HAP-1 (cell line): ENCODE measurements at regions of chr10 and their contacts with region 1.

Region 1: DNA sequence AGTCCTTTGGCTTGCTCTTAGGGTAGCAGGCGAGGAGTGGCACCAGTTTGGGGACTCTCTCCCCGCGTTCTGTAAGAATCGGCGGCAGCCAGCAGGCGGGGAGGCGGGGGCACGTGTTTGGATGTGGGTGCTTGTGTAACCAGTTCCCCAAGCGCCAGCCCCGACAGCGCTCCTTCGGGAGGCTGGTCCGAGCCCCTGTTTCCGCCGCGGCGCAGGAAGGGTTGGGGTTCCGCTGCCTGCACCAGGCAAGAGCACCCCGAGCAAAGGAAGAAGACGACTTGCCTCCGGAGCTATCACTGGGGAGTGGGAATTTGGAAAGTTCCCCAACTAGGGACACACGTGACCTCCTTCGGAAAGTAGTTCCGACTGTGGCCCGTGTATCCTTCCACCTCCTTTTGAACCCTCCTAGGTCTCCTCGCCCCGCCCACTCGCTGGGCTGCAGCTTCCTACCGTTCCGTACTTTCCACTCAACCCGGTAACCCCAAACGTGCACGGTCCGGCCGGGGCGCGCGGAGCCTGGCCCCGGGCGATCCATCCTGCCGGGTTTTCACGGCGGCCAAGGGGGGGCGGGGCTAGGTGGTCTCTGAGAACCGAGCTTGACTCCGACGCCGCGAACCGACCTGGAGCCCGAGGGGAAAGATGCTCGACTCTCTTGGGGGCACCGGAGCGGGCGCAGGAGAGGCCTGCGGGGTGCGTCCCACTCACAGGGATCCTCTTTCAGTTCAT is 1.2 kb downstream of the KLLN start:
- DNase-seq: peak; percentile 87 to 95
- H3K4me3 ChIP-seq: peak overlapping the region; percentile 73
- H3K4me1 ChIP-seq: peaks cover 4% of the 10 kb centered on the region; the same call in 1 of the 2 replicates
- H3K27me3 ChIP-seq: no peaks in the 10 kb centered on the region

Region 2: DNA sequence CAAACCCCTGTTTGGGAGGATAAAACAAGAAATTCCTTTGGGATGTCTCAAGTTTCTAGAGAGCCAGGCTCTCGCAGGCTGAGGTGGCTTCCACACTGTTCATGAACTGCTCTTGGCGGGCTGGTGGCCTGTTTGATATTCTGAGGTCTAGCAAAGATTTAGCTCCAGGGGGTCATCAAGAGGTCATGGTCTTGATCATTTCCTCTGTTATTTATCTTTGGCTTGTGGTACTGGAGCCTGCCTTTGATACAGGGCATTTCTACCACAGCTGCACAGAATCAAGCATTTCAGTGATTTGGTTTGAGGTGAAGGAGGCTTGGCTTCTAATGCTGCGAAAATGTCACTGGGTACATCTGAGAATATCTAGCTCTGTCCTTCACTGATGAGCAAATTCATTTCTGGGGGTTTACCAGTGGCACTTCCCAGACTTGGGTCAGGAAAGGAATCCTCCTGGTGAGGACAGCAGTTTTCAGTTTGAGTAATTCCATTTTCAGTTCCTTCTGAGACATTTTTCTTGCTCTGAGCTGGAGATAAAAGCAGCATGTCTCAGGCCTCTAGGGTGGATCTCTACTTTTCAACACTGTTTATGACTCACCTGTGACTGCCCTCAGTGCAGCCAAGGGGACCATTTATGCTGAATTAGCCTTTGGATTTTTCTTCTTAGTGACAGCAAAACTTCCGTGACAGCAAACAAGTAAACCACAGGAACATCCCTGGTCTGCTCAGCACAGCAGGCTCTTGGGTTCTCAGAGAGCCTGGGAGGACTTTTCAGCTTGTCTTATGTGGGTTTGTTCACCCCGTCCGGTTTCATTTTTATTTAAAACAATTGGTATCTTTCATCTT is 409.0 kb after region 1 on chr10:
- in situ Hi-C with region 1: no loop called
- DNase-seq: no peak
- H3K4me3 ChIP-seq: no peak overlapping the region
- H3K4me1 ChIP-seq: no peaks in the 10 kb centered on the region
- H3K27me3 ChIP-seq: no peaks in the 10 kb centered on the region

Region 3: GRCh38 chr10:89351780-89352597 is 1489.9 kb after region 1 on chr10:
- in situ Hi-C with region 1: loop called (anchors 5 kb)
- DNase-seq: peak in 1 of 2 experiments; percentile 19
- H3K4me3 ChIP-seq: no peak overlapping the region
- H3K4me1 ChIP-seq: peaks cover 46% of the 10 kb centered on the region
- H3K27me3 ChIP-seq: no peaks in the 10 kb centered on the region